ENCODE measurements at regions of chr6 and their contacts with region 1.

Region 1: GRCh38 chr6:130743175-130743574 is 84.0 kb upstream of the SMLR1 start:
- DNase-seq: peak in 1 of 2 experiments; percentile 66
- H3K4me3 ChIP-seq: no peak overlapping the region
- H3K27ac ChIP-seq: no peak overlapping the region
- H3K4me1 ChIP-seq: no peaks in the 10 kb centered on the region
- H3K27me3 ChIP-seq: no peaks in the 10 kb centered on the region
- CTCF ChIP-seq: peak; percentile 1 to 65 (median 56)
- EP300 ChIP-seq: no peak
- POLR2A ChIP-seq: no peak
- RAD21 ChIP-seq: peak; percentile 30 to 53; a peak in 3 of 4 replicates

Region 2: GRCh38 chr6:130717657-130718056 is 25.5 kb before region 1 on chr6:
- CTCF ChIA-PET with region 1: interaction called, 27 read pairs
- POLR2A ChIA-PET with region 1: no interaction called
- DNase-seq: no peak
- H3K4me3 ChIP-seq: no peak overlapping the region
- H3K27ac ChIP-seq: no peak overlapping the region
- H3K4me1 ChIP-seq: peaks cover 5 to 15% (median 8%) of the 10 kb centered on the region in 4 experiments; a peak in 6 of 7 replicates
- H3K27me3 ChIP-seq: no peaks in the 10 kb centered on the region
- CTCF ChIP-seq: no peak
- EP300 ChIP-seq: no peak
- POLR2A ChIP-seq: no peak
- RAD21 ChIP-seq: no peak

Region 3: GRCh38 chr6:130724089-130724488 is 19.1 kb before region 1 on chr6:
- CTCF ChIA-PET with region 1: interaction called, 27 read pairs
- POLR2A ChIA-PET with region 1: no interaction called
- DNase-seq: no peak
- H3K4me3 ChIP-seq: no peak overlapping the region
- H3K27ac ChIP-seq: no peak overlapping the region
- H3K4me1 ChIP-seq: no peaks in the 10 kb centered on the region
- H3K27me3 ChIP-seq: no peaks in the 10 kb centered on the region
- CTCF ChIP-seq: no peak
- EP300 ChIP-seq: no peak
- POLR2A ChIP-seq: no peak
- RAD21 ChIP-seq: no peak

Region 4: DNA sequence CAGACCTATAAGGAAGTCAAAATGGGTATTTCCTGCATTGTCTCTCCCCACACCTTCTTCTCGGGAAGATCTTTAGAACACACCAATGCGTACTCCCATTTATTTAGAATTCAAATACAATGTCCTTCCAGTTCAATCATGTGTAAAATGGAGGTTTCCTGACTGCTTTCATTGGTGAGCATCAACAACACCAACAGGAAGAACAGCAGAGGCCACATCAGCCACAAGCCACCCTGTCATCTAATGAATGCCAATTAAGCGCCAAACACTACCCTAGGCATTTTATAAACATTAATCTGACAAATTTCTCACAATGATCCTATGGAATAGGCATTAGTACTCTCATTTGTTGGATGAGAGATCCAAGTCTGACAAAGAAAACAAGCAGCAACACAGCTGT is 15.6 kb after region 1 on chr6:
- CTCF ChIA-PET with region 1: interaction called, 19 read pairs
- POLR2A ChIA-PET with region 1: no interaction called
- DNase-seq: no peak
- H3K4me3 ChIP-seq: no peak overlapping the region
- H3K27ac ChIP-seq: no peak overlapping the region
- H3K4me1 ChIP-seq: no peaks in the 10 kb centered on the region
- H3K27me3 ChIP-seq: no peaks in the 10 kb centered on the region
- CTCF ChIP-seq: no peak
- EP300 ChIP-seq: no peak
- POLR2A ChIP-seq: no peak
- RAD21 ChIP-seq: no peak

Region 5: GRCh38 chr6:130803804-130804203 is 60.6 kb after region 1 on chr6:
- CTCF ChIA-PET with region 1: no interaction called
- POLR2A ChIA-PET with region 1: no interaction called
- DNase-seq: no peak
- H3K4me3 ChIP-seq: no peak overlapping the region
- H3K27ac ChIP-seq: no peak overlapping the region
- H3K4me1 ChIP-seq: no peaks in the 10 kb centered on the region
- H3K27me3 ChIP-seq: no peaks in the 10 kb centered on the region
- CTCF ChIP-seq: no peak
- EP300 ChIP-seq: no peak
- POLR2A ChIP-seq: no peak
- RAD21 ChIP-seq: no peak

Measured in H1 (cell line).